HCT116 (cell line): ENCODE measurements at regions of chr18 and their contacts with region 1.

Region 1: GRCh38 chr18:35497370-35498197 is at the start of gene INO80C:
- DNase-seq: peak; percentile 92
- ATAC-seq: peak; percentile 94
- H3K4me3 ChIP-seq: peak within 1 kb of the TSS; percentile 60 to 74
- H3K27ac ChIP-seq: peak within 1 kb of the TSS; percentile 83
- H3K4me1 ChIP-seq: peaks cover 10 to 26% of the 10 kb centered on the region in 2 experiments; a peak in 3 of 4 replicates
- H3K27me3 ChIP-seq: no peaks in the 10 kb centered on the region
- CTCF ChIP-seq: no peak
- POLR2A ChIP-seq: peak; percentile 97
- RAD21 ChIP-seq: peak; percentile 29; the same call in 1 of the 2 replicates
- total RNA-seq, gene INO80C: 30.7 TPM

Region 2: GRCh38 chr18:34929336-34929780 is 568.2 kb before region 1 on chr18:
- CTCF ChIA-PET with region 1: no interaction called
- POLR2A ChIA-PET with region 1: no interaction called
- RAD21 ChIA-PET with region 1: no interaction called
- intact Hi-C with region 1: no loop called
- DNase-seq: peak; percentile 55
- ATAC-seq: peak; percentile 91
- H3K4me3 ChIP-seq: peak overlapping the region in 1 of 2 experiments; percentile 35; a peak in 2 of 4 replicates
- H3K27ac ChIP-seq: peak overlapping the region; percentile 37; the same call in 1 of the 2 replicates
- H3K4me1 ChIP-seq: peaks cover 19 to 25% of the 10 kb centered on the region in 2 experiments; a peak in 3 of 4 replicates
- H3K27me3 ChIP-seq: no peaks in the 10 kb centered on the region
- CTCF ChIP-seq: no peak
- POLR2A ChIP-seq: no peak
- RAD21 ChIP-seq: no peak

Region 3: DNA sequence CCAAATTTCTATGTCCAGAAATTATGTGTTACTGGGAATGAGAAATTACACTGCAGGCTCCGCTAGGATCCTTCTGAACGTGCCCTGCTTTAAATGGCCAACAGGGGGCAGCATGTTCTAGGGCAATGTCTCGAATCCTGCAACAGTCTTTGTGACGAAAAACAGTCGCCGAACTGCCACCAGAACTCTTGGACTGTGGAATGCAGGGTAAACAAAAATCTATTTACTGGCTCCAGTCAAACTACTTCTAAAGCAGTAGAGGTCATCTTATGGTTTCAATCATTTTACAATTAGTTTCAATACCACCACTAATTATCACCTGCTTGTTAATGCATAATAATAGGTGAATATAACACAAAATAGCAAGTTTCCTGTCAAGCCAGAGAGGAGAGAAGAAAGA is 266.5 kb before region 1 on chr18:
- CTCF ChIA-PET with region 1: no interaction called
- POLR2A ChIA-PET with region 1: no interaction called
- RAD21 ChIA-PET with region 1: no interaction called
- intact Hi-C with region 1: loop called (anchors 10 kb)
- DNase-seq: peak; percentile 82
- ATAC-seq: peak; percentile 94
- H3K4me3 ChIP-seq: peak overlapping the region; percentile 16 to 21; a peak in 2 of 4 replicates
- H3K27ac ChIP-seq: no peak overlapping the region
- H3K4me1 ChIP-seq: no peaks in the 10 kb centered on the region
- H3K27me3 ChIP-seq: no peaks in the 10 kb centered on the region
- CTCF ChIP-seq: peak; percentile 80 to 91 (median 88)
- POLR2A ChIP-seq: no peak
- RAD21 ChIP-seq: peak; percentile 87

Region 4: DNA sequence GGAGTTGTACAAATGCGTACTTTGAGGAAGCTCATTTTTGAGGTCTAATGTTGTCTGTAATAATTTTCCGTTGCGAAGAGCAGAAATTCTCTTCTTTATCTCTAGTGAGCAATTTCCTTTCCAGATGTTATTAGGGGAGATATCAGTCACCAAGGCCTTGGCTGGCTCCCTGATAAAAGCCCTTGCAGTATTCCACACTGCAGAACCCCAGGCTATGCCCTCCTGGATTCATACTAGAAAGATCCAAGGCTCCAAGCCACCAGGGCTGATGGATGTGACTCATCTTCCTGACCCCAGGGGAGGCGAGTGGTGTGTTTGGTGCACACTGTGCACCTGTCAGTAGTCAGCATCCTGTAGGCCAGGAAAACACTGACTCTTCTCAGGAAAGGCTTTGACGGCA is 34.5 kb before region 1 on chr18:
- CTCF ChIA-PET with region 1: no interaction called
- POLR2A ChIA-PET with region 1: no interaction called
- RAD21 ChIA-PET with region 1: no interaction called
- intact Hi-C with region 1: no loop called
- DNase-seq: no peak
- ATAC-seq: peak; percentile 25; the same call in 1 of the 2 replicates
- H3K4me3 ChIP-seq: no peak overlapping the region
- H3K27ac ChIP-seq: no peak overlapping the region
- H3K4me1 ChIP-seq: peaks cover 26 to 36% of the 10 kb centered on the region in 2 experiments
- H3K27me3 ChIP-seq: no peaks in the 10 kb centered on the region
- CTCF ChIP-seq: no peak
- POLR2A ChIP-seq: no peak
- RAD21 ChIP-seq: no peak

Region 5: GRCh38 chr18:35478520-35479435 is 18.8 kb before region 1 on chr18:
- CTCF ChIA-PET with region 1: interaction called, 4 read pairs
- POLR2A ChIA-PET with region 1: interaction called, 17 read pairs
- RAD21 ChIA-PET with region 1: no interaction called
- intact Hi-C with region 1: loop called (anchors 1 kb)
- DNase-seq: peak; percentile 95
- ATAC-seq: peak; percentile 96
- H3K4me3 ChIP-seq: peak overlapping the region in 1 of 2 experiments; percentile 36; a peak in 3 of 4 replicates
- H3K27ac ChIP-seq: peak overlapping the region; percentile 63; the same call in 1 of the 2 replicates
- H3K4me1 ChIP-seq: peaks cover 40 to 46% of the 10 kb centered on the region in 2 experiments
- H3K27me3 ChIP-seq: no peaks in the 10 kb centered on the region
- CTCF ChIP-seq: no peak; a peak in 1 of 6 replicates
- POLR2A ChIP-seq: no peak
- RAD21 ChIP-seq: 0 out of 2 replicates have a peak, but pooled peaks have one; percentile 9

Region 6: GRCh38 chr18:35811896-35812295 is 314.3 kb after region 1 on chr18:
- CTCF ChIA-PET with region 1: no interaction called
- POLR2A ChIA-PET with region 1: no interaction called
- RAD21 ChIA-PET with region 1: no interaction called
- intact Hi-C with region 1: no loop called
- DNase-seq: no peak
- ATAC-seq: no peak
- H3K4me3 ChIP-seq: no peak overlapping the region
- H3K27ac ChIP-seq: no peak overlapping the region
- H3K4me1 ChIP-seq: no peaks in the 10 kb centered on the region
- H3K27me3 ChIP-seq: peaks cover 18% of the 10 kb centered on the region; the same call in 1 of the 2 replicates
- CTCF ChIP-seq: no peak
- POLR2A ChIP-seq: no peak
- RAD21 ChIP-seq: no peak